Activated CD8-positive, alpha-beta memory T cell treated with anti-CD3 and anti-CD28 coated beads, Interleukin-2, amount 10 ng/mL, durations not matched to agents 7 days and 5 days (primary cell): ENCODE measurements at regions of chr11 and their contacts with region 1.

Region 1: GRCh38 chr11:118015385-118015841 is 29.2 kb downstream of the IL10RA start:
- DNase-seq: peak; percentile 77
- ATAC-seq: peak; percentile 59
- H3K4me3 Mint-ChIP-seq: peak overlapping the region; percentile 46
- H3K27ac Mint-ChIP-seq: peak overlapping the region; percentile 92
- H3K4me1 Mint-ChIP-seq: peaks cover 74% of the 10 kb centered on the region
- H3K27me3 Mint-ChIP-seq: no peaks in the 10 kb centered on the region

Region 2: DNA sequence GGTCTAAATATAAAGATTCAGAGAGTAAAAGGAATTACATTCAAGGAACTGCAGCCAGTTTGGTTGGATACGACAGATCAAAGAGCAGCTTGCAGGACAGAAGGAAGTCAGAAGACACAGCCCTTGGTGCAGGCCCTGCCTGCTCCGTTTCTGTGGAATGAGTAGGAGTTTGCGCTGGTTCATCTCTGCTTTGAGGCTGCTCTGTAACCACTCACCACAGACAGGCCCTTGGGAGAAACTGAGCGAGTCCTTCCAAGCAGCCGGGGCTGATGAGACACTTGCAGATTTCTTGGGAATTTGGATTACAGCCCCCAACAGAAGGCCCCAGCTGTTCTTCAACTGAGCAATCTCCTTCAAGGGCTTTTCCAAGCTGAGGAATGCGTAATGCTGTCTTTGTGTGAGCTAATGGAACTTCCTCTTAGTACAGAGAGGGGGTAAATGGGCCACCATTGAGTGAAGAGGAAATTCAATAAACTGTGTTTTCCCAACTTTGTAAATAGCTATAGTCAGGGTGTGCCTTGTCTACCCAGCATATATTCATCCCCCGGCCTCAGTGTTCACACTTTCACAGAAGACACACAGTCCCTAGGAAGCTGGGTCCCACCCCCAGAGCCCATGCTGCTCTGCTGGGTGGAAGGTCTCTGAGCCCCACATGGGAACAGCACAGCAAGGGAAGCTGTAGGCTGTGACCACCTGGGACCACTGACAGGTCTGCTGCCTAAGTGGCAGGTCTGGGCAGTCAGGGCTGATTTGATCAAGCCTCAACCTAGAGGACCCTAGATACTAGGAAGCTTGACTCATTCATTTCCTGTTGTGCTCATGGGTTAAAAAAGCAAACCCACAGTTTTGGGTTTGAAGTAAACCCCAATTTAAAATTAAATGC is 12.6 kb before region 1 on chr11:
- CTCF ChIA-PET with region 1: interaction called, 28 read pairs
- DNase-seq: peak; percentile 85
- ATAC-seq: peak; percentile 53
- H3K4me3 Mint-ChIP-seq: peak overlapping the region; percentile 54
- H3K27ac Mint-ChIP-seq: peak overlapping the region; percentile 98
- H3K4me1 Mint-ChIP-seq: peaks cover 100% of the 10 kb centered on the region
- H3K27me3 Mint-ChIP-seq: no peaks in the 10 kb centered on the region